ENCODE measurements at regions of chr2 and their contacts with region 1.

Region 1: GRCh38 chr2:170815746-170816503 is 762 bp upstream of the GAD1 start:
- DNase-seq: peak; percentile 85
- H3K27ac ChIP-seq: peak overlapping the region; percentile 88
- CTCF ChIP-seq: peak; percentile 89

Region 2: GRCh38 chr2:170361090-170361936 is 454.6 kb before region 1 on chr2:
- CTCF ChIA-PET with region 1: interaction called, 12 read pairs
- POLR2A ChIA-PET with region 1: no interaction called
- DNase-seq: peak; percentile 36
- H3K27ac ChIP-seq: no peak overlapping the region
- CTCF ChIP-seq: peak; percentile 75

Region 3: GRCh38 chr2:170369894-170370293 is 446.0 kb before region 1 on chr2:
- CTCF ChIA-PET with region 1: interaction called, 18 read pairs
- POLR2A ChIA-PET with region 1: no interaction called
- DNase-seq: peak; percentile 25
- H3K27ac ChIP-seq: no peak overlapping the region
- CTCF ChIP-seq: peak; percentile 35

Region 4: GRCh38 chr2:170377500-170378207 is 438.3 kb before region 1 on chr2:
- CTCF ChIA-PET with region 1: interaction called, 10 read pairs
- POLR2A ChIA-PET with region 1: no interaction called
- DNase-seq: no peak
- H3K27ac ChIP-seq: no peak overlapping the region
- CTCF ChIP-seq: peak; percentile 23; the same call in 1 of the 2 replicates

Region 5: GRCh38 chr2:171008550-171009205 is 192.8 kb after region 1 on chr2:
- CTCF ChIA-PET with region 1: no interaction called
- POLR2A ChIA-PET with region 1: no interaction called
- DNase-seq: no peak
- H3K27ac ChIP-seq: no peak overlapping the region
- CTCF ChIP-seq: no peak

Measured in RWPE1 (cell line).